GM18951 (cell line): ENCODE measurements at regions of chr1 and their contacts with region 1.

Region 1: GRCh38 chr1:203273206-203273868 is 32.0 kb upstream of the BTG2 start:
- POLR2A ChIP-seq: peak; percentile 43

Region 2: DNA sequence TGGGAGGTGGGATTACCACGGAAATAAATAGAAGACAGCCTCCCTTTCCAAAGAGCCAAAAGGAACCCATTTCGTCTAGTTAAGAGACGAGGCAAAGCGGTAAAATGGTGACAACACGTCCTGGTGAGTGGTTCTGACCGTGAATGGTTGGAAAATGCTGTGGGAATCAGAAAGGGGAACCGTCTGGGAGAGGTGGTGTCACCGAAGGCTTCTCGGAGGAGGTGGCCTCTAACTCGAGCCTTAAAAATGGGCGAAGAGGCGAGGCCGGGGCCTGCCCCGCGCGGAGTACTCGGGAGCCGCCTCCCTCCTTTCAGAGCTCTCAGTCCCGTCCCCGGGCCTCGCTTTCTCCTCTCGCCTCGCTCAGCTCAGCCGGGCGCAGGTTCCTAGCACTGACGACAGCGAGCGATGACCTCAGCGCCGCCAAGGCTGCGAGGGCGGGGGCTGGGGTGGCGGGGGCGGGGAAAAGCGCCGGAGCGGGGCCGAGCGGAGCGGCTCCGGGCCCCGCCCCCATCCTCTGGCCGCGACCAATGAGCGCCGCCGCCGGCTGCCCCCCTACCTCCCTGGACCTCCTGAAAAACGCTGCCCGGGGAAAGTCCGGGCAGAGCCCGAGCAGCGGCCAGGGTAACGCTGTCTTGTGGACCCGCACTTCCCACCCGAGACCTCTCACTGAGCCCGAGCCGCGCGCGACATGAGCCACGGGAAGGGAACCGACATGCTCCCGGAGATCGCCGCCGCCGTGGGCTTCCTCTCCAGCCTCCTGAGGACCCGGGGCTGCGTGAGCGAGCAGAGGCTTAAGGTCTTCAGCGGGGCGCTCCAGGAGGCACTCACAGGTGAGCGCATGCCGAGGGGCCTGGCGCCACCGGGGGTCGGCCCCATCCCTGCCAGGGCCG is 31.8 kb after region 1 on chr1 and contains the start of gene BTG2:
- in situ Hi-C with region 1: loop called (anchors 5 kb)
- POLR2A ChIP-seq: peak; percentile 100

Region 3: DNA sequence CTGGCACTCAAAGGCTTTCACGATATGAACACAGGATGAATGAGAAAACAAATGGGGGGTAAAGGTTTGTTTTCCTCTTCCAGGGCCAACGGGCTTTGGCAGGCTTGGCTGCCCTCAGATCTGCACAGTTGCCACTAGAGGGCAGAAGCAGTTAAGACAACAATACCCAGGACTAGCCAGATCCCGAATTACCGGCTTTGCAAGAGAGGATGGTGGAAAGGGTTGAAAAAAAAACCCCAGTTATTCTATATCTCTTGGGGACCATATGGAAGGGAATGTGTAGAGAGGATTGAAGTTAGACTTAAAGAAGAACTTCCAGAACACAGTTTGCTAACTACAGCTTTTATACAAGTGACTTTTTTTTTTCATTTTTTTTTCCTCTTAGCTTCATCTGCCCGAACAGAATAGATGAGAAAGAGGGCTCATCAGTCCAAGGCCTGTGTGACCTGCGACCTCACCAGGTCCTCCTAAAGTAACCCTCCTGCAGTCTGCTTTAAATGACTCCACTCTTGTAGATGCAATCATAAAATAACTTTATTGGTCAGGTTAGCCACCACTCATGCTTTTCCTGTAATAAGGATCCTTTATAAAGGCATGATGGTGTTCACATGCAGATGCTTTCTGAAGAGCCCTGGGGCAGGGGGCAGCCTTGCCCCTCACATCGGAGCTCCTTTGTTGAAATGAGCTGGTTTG is 66.9 kb after region 1 on chr1:
- in situ Hi-C with region 1: loop called (anchors 5 kb)
- POLR2A ChIP-seq: no peak

Region 4: GRCh38 chr1:203486618-203487370 is 213.5 kb after region 1 on chr1:
- in situ Hi-C with region 1: loop called (anchors 5 kb)
- POLR2A ChIP-seq: no peak